ENCODE measurements at regions of chr4 and their contacts with region 1.

Region 1: DNA sequence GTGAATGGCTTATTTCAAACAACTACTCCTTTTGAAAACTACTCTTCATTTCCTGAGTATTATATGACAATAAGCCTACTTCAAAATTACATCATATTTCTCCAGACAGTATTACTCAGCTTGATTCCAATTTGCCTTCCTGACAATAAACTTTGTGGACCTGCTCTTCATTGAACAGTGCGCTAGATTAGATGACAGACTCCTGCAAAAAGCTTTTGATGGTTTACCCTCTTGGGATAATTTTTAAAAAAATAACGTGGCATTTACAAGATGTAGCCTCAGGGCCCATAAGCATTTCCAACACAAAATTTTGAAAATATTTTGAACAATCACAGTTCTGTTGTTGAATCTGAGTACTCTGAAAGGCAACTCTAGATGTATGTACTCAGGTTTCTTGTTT is 25.9 kb downstream of the MGAT4D start:
- DNase-seq: no peak
- ATAC-seq: no peak
- H3K4me3 ChIP-seq: no peak overlapping the region
- H3K27ac ChIP-seq: no peak overlapping the region
- H3K4me1 ChIP-seq: no peaks in the 10 kb centered on the region
- H3K27me3 ChIP-seq: no peaks in the 10 kb centered on the region
- CTCF ChIP-seq: no peak

Region 2: DNA sequence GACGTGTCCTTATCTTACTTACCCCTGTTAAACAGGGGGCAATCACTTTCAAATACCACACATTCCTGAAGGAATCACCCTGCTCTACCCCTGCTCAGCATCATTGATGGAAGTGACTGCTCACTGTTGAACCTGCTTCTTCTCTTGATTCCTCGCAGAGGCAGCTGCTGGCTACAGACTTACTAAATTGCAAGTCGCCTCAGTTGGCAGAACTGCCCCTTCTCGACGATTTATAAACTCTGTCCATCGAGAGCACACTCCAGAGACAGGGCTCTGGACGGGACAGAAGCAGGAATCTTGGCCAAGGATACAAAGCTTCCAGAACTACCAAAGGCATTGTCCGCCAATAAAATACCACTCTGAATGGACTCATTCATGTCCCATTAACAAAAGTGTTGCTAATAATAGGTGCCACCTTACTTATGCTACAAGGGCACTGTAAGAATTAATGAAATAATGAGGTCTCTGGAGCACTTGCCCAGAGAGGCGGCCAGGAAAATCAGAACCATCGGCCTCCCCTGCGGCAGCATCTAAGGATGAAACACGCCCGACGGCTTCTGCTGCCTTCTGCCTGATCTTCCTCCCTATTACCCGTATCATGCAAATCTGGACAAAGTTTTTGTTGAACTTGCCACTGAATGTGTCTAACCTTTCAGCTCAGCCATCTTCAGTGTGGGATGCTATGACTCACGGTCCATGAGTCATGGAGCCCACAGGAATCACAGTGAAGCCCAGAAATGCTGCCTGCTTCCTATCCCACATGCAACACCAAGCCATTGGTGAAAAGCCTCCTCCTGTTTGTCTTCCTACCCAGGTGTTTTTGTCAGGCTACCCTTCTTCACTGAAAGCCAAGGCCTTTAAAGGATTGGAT is 483.1 kb before region 1 on chr4:
- CTCF ChIA-PET with region 1: no interaction called
- POLR2A ChIA-PET with region 1: no interaction called
- in situ Hi-C with region 1: no loop called
- intact Hi-C with region 1: no loop called
- DNase-seq: peak; percentile 73
- ATAC-seq: peak; percentile 97
- H3K4me3 ChIP-seq: no peak overlapping the region
- H3K27ac ChIP-seq: 0 out of 2 replicates have a peak overlapping the region, but pooled peaks have one; percentile 12
- H3K4me1 ChIP-seq: peaks cover 12% of the 10 kb centered on the region
- H3K27me3 ChIP-seq: no peaks in the 10 kb centered on the region
- CTCF ChIP-seq: no peak

Region 3: DNA sequence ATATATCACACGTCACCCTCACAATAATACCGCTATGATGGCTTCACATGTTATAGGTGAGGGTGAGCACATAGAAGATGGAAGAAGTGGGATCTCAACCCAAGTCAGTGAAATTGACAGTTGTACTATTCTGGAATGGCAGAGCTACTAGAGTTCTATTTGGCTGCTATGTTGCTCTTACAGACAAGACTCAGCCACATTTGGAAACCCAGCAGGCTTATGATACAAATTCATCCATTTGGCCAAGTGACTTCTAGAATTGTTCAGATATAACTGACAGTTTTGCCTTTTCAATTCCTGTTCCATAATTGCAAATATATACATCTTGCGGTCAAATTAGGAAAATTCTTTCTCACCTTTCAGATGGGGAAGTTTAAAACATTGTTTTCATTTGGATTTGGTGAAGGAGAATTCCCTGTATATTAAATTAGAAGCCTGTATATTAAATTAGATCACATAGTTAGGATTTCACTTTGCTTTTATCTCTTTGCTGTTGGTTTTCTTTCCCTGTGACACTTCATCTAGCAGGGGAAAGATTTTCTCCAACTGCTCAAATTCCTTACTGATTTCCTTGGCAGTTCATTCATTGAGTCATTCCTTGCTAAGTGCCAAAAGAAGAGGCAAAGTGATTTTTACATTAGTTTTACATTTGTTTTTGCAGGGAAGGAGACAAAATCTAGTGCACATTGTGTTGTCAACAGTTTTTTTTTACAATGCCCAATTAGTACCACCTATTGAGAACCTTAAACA is 404.6 kb after region 1 on chr4:
- CTCF ChIA-PET with region 1: no interaction called
- POLR2A ChIA-PET with region 1: interaction called, 10 read pairs
- in situ Hi-C with region 1: no loop called
- intact Hi-C with region 1: no loop called
- DNase-seq: no peak
- ATAC-seq: no peak
- H3K4me3 ChIP-seq: no peak overlapping the region
- H3K27ac ChIP-seq: no peak overlapping the region
- H3K4me1 ChIP-seq: no peaks in the 10 kb centered on the region
- H3K27me3 ChIP-seq: peaks cover 2% of the 10 kb centered on the region; the same call in 1 of the 2 replicates
- CTCF ChIP-seq: no peak

Region 4: DNA sequence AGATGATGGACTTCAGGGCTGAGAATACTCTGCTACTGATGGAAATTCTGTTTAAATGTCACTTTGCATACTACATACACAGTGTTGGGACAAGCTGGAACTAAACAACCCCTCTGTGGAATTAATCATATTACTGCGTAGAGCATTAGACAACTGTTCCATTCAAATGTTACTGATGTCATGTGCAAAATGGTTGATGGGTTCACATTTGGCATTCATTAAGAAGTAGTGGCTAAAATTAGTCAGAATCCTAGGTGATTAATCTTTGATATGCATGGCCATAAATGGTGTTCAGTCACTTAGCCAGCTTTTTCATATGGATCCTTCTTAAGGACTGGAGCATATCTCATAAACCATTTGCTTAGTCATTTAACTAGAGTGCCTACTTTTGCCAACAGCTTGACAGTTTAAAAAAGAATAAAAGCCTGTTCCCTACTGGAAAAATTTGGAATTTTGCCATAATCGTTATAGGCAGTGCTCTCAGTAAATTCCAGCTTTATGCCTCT is 555.9 kb after region 1 on chr4:
- CTCF ChIA-PET with region 1: no interaction called
- POLR2A ChIA-PET with region 1: no interaction called
- in situ Hi-C with region 1: no loop called
- intact Hi-C with region 1: no loop called
- DNase-seq: no peak
- ATAC-seq: no peak
- H3K4me3 ChIP-seq: no peak overlapping the region
- H3K27ac ChIP-seq: no peak overlapping the region
- H3K4me1 ChIP-seq: no peaks in the 10 kb centered on the region
- H3K27me3 ChIP-seq: no peaks in the 10 kb centered on the region
- CTCF ChIP-seq: no peak